ENCODE measurements at regions of chr2 and their contacts with region 1.

Region 1: GRCh38 chr2:73284296-73285158 is at the start of gene FBXO41:
- DNase-seq: peak; percentile 93
- H3K4me3 Mint-ChIP-seq: peak within 1 kb of the TSS; percentile 85
- H3K27ac Mint-ChIP-seq: peak within 1 kb of the TSS; percentile 78
- H3K4me1 Mint-ChIP-seq: peaks cover 22% of the 10 kb centered on the region
- H3K27me3 Mint-ChIP-seq: peaks cover 20% of the 10 kb centered on the region
- total RNA-seq, gene FBXO41: 32.2 and 33.8 TPM in 2 replicates

Region 2: DNA sequence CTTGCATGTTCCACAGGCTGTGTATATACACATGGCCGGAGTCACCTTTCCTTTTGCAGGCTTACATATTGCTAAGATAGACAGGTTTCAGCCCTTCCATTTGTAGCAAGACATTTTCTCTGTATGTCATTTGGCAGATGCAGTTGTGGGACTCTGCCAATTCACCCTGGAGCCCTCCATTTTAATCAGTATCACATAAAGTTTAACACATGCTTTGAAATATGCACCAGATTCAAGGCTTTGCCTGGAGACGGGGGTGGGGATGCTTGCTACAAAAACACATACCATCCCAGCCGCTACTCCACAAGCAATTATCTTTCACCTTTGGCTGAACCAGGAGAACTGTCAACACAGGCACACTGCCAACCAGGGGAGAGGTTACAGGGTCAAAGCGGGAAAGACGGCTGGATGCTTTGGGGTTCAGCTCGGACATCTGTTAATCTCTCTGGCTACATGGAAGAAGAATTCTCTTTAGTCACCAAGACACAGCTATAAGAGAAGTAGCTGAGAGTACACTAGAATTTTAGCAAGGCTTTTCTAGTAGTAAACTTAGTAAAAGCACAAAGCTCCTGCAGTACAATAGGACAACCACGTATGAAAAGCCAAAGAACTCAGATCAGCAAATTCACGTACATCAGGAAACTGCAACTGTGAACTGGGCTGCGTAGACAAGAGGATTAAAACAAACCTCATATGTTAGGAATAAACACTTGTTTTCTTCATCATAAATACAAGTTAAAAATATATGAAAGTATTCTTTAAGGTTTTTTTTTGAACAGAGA is 589.6 kb before region 1 on chr2:
- intact Hi-C with region 1: no loop called
- DNase-seq: no peak
- H3K4me3 Mint-ChIP-seq: no peak overlapping the region
- H3K27ac Mint-ChIP-seq: no peak overlapping the region
- H3K4me1 Mint-ChIP-seq: no peaks in the 10 kb centered on the region
- H3K27me3 Mint-ChIP-seq: no peaks in the 10 kb centered on the region

Region 3: GRCh38 chr2:73268830-73269685 is 15.5 kb before region 1 on chr2:
- intact Hi-C with region 1: loop called (anchors 1 kb)
- DNase-seq: peak; percentile 93
- H3K4me3 Mint-ChIP-seq: peak overlapping the region; percentile 43
- H3K27ac Mint-ChIP-seq: no peak overlapping the region
- H3K4me1 Mint-ChIP-seq: peaks cover 14% of the 10 kb centered on the region
- H3K27me3 Mint-ChIP-seq: no peaks in the 10 kb centered on the region

Measured in activated CD4-positive, alpha-beta T cell treated with anti-CD3 and anti-CD28 coated beads, Interleukin-2, amount 10 ng/mL, durations not matched to agents 24 days and 14 days (primary cell).